ENCODE measurements at regions of chr1 and their contacts with region 1.

Region 1: GRCh38 chr1:205591522-205592351 is 40.1 kb downstream of the ELK4 start:
- DNase-seq: peak; percentile 26 to 94
- H3K4me3 ChIP-seq: peak overlapping the region; percentile 40 to 62
- H3K27ac ChIP-seq: no peak overlapping the region
- H3K4me1 ChIP-seq: peaks cover 0 to 9% of the 10 kb centered on the region in 2 donors
- H3K27me3 ChIP-seq: no peaks in the 10 kb centered on the region
- CTCF ChIP-seq: peak; percentile 99 to 100 (median 99)

Region 2: GRCh38 chr1:205528887-205529825 is 62.6 kb before region 1 on chr1:
- intact Hi-C with region 1: loop called (anchors 5 kb)
- DNase-seq: peak in 1 of 2 donors; percentile 86
- H3K4me3 ChIP-seq: peak overlapping the region; percentile 14 to 60
- H3K27ac ChIP-seq: no peak overlapping the region
- H3K4me1 ChIP-seq: peaks cover 2 to 3% of the 10 kb centered on the region in 2 donors
- H3K27me3 ChIP-seq: no peaks in the 10 kb centered on the region
- CTCF ChIP-seq: peak; percentile 83 to 96 (median 94)

Region 3: DNA sequence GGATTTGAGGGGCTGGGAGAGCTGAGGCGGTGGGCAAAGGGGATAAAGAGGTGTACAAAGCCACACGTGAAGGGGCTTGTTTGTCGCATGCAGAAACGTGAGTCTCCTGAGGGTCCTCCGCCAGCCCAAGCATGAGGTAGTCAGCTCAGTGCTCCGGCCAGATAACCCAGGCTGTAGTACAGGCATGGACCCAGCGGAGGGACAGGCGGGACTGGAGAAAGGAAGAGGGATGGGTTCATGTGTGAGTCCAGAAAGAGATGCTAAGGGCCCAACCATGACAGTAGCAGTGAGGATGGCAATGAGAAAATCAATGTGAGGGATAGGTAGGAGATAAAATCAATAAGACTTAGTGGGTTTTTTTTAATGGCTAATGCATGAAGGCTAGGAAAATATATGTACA is 53.8 kb after region 1 on chr1:
- intact Hi-C with region 1: no loop called
- DNase-seq: no peak
- H3K4me3 ChIP-seq: no peak overlapping the region
- H3K27ac ChIP-seq: no peak overlapping the region
- H3K4me1 ChIP-seq: no peaks in the 10 kb centered on the region
- H3K27me3 ChIP-seq: no peaks in the 10 kb centered on the region
- CTCF ChIP-seq: no peak

Region 4: DNA sequence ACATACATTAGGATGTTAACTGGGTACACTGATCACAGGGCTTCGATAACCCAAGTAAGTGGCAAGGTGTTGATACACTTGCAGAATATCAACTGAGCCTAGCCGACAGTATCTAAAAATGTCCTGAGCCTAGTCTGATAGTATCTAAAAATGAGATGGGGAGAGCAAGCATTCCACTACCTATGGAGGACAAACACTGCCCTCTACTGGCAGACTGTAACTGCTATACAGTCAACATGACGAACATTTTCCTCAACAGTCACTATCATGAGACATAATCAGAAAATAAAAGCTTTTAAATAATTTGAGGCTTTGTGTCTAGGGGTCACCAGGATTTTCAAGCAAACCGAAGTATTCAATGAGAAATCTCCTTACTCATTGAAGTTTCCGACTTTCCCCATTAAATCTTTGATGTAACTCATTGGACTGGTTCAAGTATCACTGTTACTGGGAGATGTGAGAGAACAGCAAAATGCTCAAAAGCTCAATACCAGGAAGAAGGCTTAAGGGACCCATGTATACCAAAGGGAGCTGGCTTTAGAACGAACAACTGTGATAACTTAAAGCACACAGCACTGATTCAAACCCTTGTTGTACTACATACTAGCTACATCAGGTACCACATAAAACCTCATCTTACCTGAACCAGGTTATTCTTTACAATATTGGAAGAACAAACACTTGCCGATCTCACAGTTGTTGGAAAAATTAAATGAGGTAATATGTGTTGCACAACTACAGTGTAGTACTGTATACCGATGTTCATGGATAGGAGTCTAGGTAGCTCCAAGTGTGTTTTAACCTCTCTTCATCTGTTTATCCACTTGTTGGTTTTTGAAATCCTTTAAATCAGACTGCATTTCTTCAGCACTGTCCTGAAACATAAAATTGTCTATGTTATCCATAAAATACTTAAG is 119.6 kb after region 1 on chr1:
- intact Hi-C with region 1: loop called (anchors 1 kb)
- DNase-seq: peak in 1 of 2 donors; percentile 86
- H3K4me3 ChIP-seq: no peak overlapping the region
- H3K27ac ChIP-seq: peak overlapping the region in 1 of 2 donors; percentile 65
- H3K4me1 ChIP-seq: peaks cover 0 to 5% of the 10 kb centered on the region in 2 donors
- H3K27me3 ChIP-seq: no peaks in the 10 kb centered on the region
- CTCF ChIP-seq: peak; percentile 69 to 87 (median 85)